Lower leg skin (tissue), 4 donors: ENCODE measurements at regions of chr3 and their contacts with region 1.

Region 1: GRCh38 chr3:22419261-22419660 is 668.3 kb upstream of the ZNF385D start:
- DNase-seq: no peak
- H3K4me3 ChIP-seq: no peak overlapping the region
- CTCF ChIP-seq: no peak
- POLR2A ChIP-seq: no peak

Region 2: DNA sequence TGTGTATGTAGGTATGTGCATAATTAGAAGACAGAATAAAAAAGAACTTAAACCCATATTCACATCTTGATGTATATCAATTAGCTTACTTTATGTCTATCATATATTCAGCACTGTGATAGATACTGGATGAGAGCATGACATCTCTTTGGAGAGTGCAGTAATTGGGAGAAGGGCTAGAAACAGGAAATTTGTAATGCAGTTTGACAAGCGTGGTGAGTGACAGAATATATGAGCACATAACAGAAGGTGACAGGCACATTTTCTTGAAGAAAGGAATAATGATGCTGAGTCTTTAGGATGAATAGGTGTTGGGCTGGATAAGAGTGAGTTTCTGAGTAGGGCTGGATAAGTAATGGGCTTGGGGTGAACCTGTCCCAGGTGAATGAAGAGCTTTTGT is 12.1 kb after region 1 on chr3:
- intact Hi-C with region 1: no loop called
- DNase-seq: no peak
- H3K4me3 ChIP-seq: no peak overlapping the region
- CTCF ChIP-seq: no peak
- POLR2A ChIP-seq: no peak

Region 3: GRCh38 chr3:22443571-22444233 is 24.4 kb after region 1 on chr3:
- intact Hi-C with region 1: loop called (anchors 2 kb)
- DNase-seq: no peak
- H3K4me3 ChIP-seq: no peak overlapping the region
- CTCF ChIP-seq: no peak
- POLR2A ChIP-seq: no peak